ENCODE measurements at regions of chr3 and their contacts with region 1.

Region 1: DNA sequence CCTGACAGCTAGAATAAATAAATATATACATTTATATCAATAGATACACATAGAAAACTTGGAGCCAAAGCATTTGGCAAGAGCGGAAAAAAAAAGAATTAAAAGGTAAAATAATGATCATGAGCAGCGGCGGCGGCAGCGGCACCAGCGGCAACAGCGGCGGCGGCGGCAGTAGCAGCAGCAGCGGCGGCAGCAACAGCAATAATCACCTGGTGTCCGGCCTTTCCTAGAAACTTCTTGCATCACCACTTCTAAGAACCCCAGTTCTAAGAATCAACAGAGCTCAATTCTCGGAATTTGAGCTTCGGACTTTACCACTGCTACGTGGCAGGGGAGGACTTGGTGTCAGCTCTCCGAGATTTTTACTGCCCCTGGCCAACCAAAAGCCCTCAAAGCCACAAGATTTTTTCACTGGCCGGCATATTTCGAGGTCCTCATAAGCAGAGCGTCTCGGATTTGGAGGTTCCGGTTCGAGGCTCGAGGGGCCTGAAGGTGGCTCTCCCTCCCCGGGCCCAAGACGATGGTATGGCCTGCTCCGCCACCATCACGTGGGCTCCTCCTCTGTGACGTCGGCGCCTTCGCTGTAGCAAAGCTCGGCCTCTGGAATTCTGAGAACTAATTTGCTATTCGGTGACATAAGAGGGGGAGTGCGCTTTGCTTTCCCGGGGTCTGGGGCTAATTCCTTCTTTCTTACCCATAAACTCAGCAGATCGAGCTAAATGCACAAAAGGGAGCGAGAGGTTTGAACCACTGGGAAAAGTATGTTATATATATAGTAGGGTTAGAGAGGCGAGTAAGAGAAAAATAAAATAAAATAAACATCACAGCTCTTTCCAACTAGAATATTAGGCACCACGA is at the start of gene BCL6:
- DNase-seq: no peak
- ATAC-seq: peak; percentile 63
- H3K4me3 ChIP-seq: peak within 1 kb of the TSS; percentile 65; the same call in 1 of the 2 replicates
- H3K27ac ChIP-seq: no peak within 1 kb of the TSS
- H3K4me1 ChIP-seq: peaks cover 7% of the 10 kb centered on the region
- H3K27me3 ChIP-seq: peaks cover 14 to 21% of the 10 kb centered on the region in 2 experiments
- CTCF ChIP-seq: no peak
- EP300 ChIP-seq: no peak
- POLR2A ChIP-seq: 0 out of 2 replicates have a peak, but pooled peaks have one; percentile 16
- RAD21 ChIP-seq: no peak
- polyA plus RNA-seq, gene BCL6: 0.04 to 0.06 TPM

Region 2: DNA sequence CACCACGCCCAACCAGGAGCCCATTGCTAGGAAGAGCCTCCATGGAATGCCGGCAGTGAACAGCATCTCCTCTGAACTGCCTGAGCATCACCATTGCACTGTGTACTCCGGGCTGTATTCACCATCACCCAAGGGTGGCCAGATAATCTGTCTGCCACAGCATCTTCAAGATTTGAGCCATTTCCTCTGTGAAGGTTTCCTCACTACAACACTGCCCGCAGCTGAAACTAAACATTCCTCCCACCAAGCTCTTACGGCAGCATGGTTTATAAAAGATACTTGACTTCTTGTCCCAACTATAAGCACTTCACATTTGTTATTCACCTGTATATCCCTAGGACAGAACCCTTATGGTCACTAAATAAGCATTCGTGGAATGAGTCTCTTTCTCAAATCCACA is 201.1 kb before region 1 on chr3:
- CTCF ChIA-PET with region 1: no interaction called
- POLR2A ChIA-PET with region 1: no interaction called
- RAD21 ChIA-PET with region 1: no interaction called
- SMC1A ChIA-PET with region 1: no interaction called
- in situ Hi-C with region 1: no loop called
- intact Hi-C with region 1: no loop called
- DNase-seq: no peak
- ATAC-seq: no peak
- H3K4me3 ChIP-seq: no peak overlapping the region
- H3K27ac ChIP-seq: no peak overlapping the region
- H3K4me1 ChIP-seq: no peaks in the 10 kb centered on the region
- H3K27me3 ChIP-seq: peaks cover 0 to 2% of the 10 kb centered on the region in 2 experiments; a peak in 1 of 4 replicates
- CTCF ChIP-seq: no peak
- EP300 ChIP-seq: no peak
- POLR2A ChIP-seq: no peak
- RAD21 ChIP-seq: no peak

Region 3: GRCh38 chr3:187802928-187803259 is 57.5 kb after region 1 on chr3:
- CTCF ChIA-PET with region 1: interaction called, 18 read pairs
- POLR2A ChIA-PET with region 1: interaction called, 5 read pairs
- RAD21 ChIA-PET with region 1: interaction called, 5 read pairs
- SMC1A ChIA-PET with region 1: interaction called, 21 read pairs
- in situ Hi-C with region 1: no loop called
- intact Hi-C with region 1: loop called (anchors 2 kb)
- DNase-seq: peak; percentile 64
- ATAC-seq: peak; percentile 81
- H3K4me3 ChIP-seq: no peak overlapping the region
- H3K27ac ChIP-seq: no peak overlapping the region
- H3K4me1 ChIP-seq: peaks cover 33% of the 10 kb centered on the region
- H3K27me3 ChIP-seq: no peaks in the 10 kb centered on the region
- CTCF ChIP-seq: no peak
- EP300 ChIP-seq: peak; percentile 99 to 100
- POLR2A ChIP-seq: no peak
- RAD21 ChIP-seq: no peak

Region 4: DNA sequence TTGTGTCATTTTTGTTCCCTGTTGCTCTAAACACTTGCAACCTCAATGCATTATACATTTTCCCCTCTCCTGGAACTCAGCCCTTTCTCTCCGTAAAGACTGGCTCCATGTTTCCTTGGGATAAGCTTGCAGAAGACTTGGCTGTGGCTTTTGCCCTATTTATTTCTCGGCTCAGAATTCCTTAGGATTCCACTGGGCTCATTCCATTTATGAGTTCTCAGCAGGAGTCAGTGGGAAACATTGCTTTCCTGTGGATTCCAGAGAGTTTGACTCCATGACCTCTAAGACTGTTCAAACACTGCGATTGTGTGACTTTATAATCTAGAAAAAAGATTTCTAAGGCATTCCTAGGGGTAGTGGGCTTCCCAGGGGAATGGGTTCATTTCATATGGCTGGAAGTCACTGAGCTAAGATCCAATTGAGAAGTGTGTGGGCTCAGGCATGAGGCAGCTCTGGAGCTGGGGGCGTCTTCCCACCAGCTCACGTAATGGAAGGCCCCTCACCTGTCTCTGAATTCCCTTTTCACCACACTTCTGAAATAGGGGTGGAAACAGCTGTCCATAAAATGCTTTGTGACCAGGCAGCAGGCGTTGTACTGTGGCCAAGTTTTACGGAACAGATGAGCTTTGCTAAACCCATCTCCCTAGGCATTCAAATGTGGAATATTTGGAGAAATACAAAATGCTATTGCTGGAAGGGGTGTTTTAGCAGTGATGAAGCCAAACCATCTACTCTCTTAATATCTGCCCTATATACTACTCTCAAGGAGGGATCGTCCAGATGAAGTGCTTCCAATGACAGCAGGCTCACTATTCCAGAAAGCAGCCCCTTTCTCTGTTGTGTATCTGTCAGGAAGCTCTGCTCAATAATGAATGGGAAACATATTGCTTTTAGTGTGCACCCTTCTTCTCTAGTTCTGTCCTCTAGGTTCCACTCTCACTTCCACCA is 91.7 kb after region 1 on chr3:
- CTCF ChIA-PET with region 1: interaction called, 37 read pairs
- POLR2A ChIA-PET with region 1: interaction called, 3 read pairs
- RAD21 ChIA-PET with region 1: interaction called, 4 read pairs
- SMC1A ChIA-PET with region 1: interaction called, 27 read pairs
- in situ Hi-C with region 1: no loop called
- intact Hi-C with region 1: no loop called
- DNase-seq: no peak
- ATAC-seq: no peak
- H3K4me3 ChIP-seq: no peak overlapping the region
- H3K27ac ChIP-seq: no peak overlapping the region
- H3K4me1 ChIP-seq: no peaks in the 10 kb centered on the region
- H3K27me3 ChIP-seq: peaks cover 0 to 4% of the 10 kb centered on the region in 2 experiments; a peak in 1 of 4 replicates
- CTCF ChIP-seq: no peak
- EP300 ChIP-seq: no peak
- POLR2A ChIP-seq: no peak
- RAD21 ChIP-seq: no peak

Region 5: DNA sequence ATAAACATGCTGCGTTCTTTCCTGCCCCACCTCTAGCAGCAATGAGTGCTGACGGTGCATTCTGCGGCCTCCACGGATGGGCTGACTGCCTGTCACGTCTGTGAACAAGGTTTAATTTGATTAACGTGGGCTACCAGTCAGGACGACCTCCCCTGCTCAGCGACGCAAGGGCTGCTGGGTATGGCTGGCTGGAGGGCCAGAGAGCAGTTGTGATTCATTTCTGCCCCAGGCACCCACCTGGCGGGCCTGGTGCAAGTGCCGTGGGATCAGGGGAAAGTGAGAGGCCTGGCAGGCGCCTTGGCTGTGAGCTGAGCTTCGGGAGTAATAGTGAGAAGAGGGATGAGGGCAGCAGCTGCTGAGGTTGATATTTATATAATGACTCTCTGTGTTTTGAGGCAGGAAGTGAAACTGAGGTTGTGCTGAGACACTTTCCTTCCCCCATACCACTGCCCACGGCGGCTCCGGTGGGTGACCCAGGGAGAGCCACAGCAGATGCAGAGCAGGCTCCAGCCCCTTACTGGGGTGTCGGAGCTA is 190.3 kb after region 1 on chr3:
- CTCF ChIA-PET with region 1: interaction called, 13 read pairs
- POLR2A ChIA-PET with region 1: no interaction called
- RAD21 ChIA-PET with region 1: interaction called, 6 read pairs
- SMC1A ChIA-PET with region 1: interaction called, 12 read pairs
- in situ Hi-C with region 1: no loop called
- intact Hi-C with region 1: no loop called
- DNase-seq: peak; percentile 66
- ATAC-seq: peak; percentile 97
- H3K4me3 ChIP-seq: no peak overlapping the region
- H3K27ac ChIP-seq: no peak overlapping the region
- H3K4me1 ChIP-seq: peaks cover 19% of the 10 kb centered on the region
- H3K27me3 ChIP-seq: peaks cover 0 to 4% of the 10 kb centered on the region in 2 experiments; a peak in 2 of 4 replicates
- CTCF ChIP-seq: no peak
- EP300 ChIP-seq: peak; percentile 89 to 93; a peak in 3 of 4 replicates
- POLR2A ChIP-seq: no peak
- RAD21 ChIP-seq: peak; percentile 10; the same call in 1 of the 2 replicates

Region 6: DNA sequence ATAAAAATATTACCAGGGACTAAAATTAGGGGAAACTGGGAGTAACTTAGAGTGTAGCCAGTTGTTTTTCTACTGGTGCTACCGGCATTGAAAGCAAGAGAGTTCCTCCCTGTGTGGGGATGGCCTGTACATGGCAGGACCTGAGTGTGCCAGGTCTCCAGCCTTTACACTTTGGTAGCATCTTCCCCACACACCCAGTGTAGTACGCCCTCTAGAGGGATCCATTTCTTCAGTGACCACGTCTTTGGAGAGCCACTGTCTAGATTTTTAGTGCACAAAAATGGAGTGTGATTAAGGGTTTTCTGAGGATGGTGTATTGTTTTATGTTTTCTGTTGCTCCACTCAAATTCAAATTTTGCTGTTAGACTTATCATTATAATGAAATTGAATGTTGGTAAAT is 919.4 kb after region 1 on chr3:
- CTCF ChIA-PET with region 1: interaction called, 12 read pairs
- POLR2A ChIA-PET with region 1: no interaction called
- RAD21 ChIA-PET with region 1: interaction called, 5 read pairs
- SMC1A ChIA-PET with region 1: interaction called, 5 read pairs
- in situ Hi-C with region 1: no loop called
- intact Hi-C with region 1: loop called (anchors 10 kb)
- DNase-seq: no peak
- ATAC-seq: peak; percentile 46; the same call in 2 of the 3 replicates
- H3K4me3 ChIP-seq: no peak overlapping the region
- H3K27ac ChIP-seq: no peak overlapping the region
- H3K4me1 ChIP-seq: no peaks in the 10 kb centered on the region
- H3K27me3 ChIP-seq: no peaks in the 10 kb centered on the region
- CTCF ChIP-seq: peak; percentile 21 to 40 (median 24); a peak in 5 of 6 replicates
- EP300 ChIP-seq: no peak
- POLR2A ChIP-seq: no peak
- RAD21 ChIP-seq: peak; percentile 26; the same call in 1 of the 2 replicates

Measured in GM12878 (cell line).